HepG2 (cell line): ENCODE measurements at regions of chr3 and their contacts with region 1.

Region 1: GRCh38 chr3:37456270-37456708 is 281.9 kb upstream of the LRRFIP2 start:
- DNase-seq: no peak
- ATAC-seq: no peak
- H3K4me3 ChIP-seq: no peak overlapping the region
- H3K27ac ChIP-seq: no peak overlapping the region
- H3K4me1 ChIP-seq: peaks cover 4% of the 10 kb centered on the region
- H3K27me3 ChIP-seq: peaks cover 7 to 61% of the 10 kb centered on the region in 2 experiments; a peak in 3 of 5 replicates
- CTCF ChIP-seq: no peak
- EP300 ChIP-seq: no peak
- POLR2A ChIP-seq: no peak
- RAD21 ChIP-seq: no peak

Region 2: DNA sequence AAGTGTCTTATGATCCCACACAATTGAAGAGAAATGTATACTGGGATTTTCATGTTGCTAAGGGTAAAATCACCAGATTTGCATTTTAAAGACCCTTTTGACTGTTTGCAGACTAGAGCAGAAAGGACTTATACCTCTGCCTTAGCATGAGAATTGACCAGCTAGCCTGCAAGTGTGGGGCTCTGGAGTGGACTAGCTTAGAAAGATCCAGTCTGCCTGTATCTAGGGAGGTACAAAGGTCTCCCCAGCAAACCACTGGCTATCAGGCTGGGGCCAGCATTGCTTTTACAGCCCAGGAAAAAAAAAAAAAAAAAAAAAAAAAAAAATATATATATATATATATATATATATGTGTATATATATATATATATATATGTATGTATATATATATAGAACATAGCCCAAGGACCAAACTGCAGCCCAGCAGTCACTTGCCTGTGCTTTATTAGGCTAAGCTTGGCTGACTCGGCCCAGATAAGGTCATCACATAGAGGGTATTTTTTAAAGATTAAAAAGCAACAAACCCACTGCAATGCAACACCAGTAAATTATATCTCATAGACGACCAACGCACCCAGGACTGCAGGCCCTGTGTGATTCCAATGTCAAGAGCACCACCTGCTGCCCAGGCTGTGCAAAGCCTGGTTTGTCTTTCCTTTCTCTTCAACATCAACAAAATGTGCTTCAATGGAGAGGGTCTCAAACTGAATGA is 755.6 kb before region 1 on chr3:
- CTCF ChIA-PET with region 1: no interaction called
- POLR2A ChIA-PET with region 1: no interaction called
- in situ Hi-C with region 1: no loop called
- intact Hi-C with region 1: no loop called
- DNase-seq: peak; percentile 44
- ATAC-seq: peak; percentile 97
- H3K4me3 ChIP-seq: no peak overlapping the region
- H3K27ac ChIP-seq: no peak overlapping the region
- H3K4me1 ChIP-seq: no peaks in the 10 kb centered on the region
- H3K27me3 ChIP-seq: no peaks in the 10 kb centered on the region
- CTCF ChIP-seq: peak; percentile 84
- EP300 ChIP-seq: no peak
- POLR2A ChIP-seq: no peak
- RAD21 ChIP-seq: peak; percentile 72

Region 3: DNA sequence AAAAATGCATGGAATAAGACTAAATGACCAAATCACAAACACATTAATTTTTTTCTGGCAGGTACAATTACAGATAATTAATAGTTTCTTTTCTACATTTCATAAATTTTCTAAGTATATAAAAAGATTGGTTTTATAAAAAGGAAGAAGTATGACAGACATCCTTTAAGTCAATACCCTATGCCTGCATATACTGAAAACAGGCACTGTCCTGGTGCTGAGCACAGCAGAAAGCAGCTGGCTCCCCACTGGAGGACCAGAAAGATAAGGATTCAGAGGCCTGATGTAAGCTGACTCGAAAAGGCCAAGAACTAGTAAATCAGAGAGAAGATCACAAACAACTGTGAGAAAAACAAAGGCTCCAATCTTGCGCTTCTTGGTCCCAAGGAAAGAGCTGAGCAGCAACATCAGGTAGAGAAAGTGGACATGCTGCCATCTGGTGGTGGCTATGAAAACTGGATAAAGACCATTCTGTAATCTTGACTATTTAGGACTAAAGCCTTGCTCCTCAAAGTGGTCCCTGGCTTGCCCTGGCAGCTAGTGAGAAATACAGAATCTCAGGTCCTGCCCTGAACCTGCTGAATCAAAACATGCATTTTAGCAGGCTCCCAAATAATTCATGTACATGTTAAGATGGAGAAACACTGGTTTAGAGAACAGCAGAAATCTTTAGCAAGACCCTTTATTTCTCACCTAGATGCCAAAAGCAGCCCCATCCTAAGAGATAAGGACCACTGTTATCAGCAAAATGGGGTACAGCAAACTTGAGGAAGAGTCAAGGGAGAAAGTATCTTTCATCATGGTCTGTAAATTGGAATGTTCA is 587.5 kb before region 1 on chr3:
- CTCF ChIA-PET with region 1: no interaction called
- POLR2A ChIA-PET with region 1: no interaction called
- in situ Hi-C with region 1: no loop called
- intact Hi-C with region 1: no loop called
- DNase-seq: peak; percentile 17
- ATAC-seq: peak; percentile 90
- H3K4me3 ChIP-seq: no peak overlapping the region
- H3K27ac ChIP-seq: no peak overlapping the region
- H3K4me1 ChIP-seq: no peaks in the 10 kb centered on the region
- H3K27me3 ChIP-seq: no peaks in the 10 kb centered on the region; a peak in 1 of 5 replicates
- CTCF ChIP-seq: peak; percentile 82
- EP300 ChIP-seq: no peak
- POLR2A ChIP-seq: no peak
- RAD21 ChIP-seq: peak; percentile 43; the same call in 1 of the 2 replicates

Region 4: GRCh38 chr3:39101022-39101689 is 1644.9 kb after region 1 on chr3:
- CTCF ChIA-PET with region 1: no interaction called
- POLR2A ChIA-PET with region 1: no interaction called
- in situ Hi-C with region 1: no loop called
- intact Hi-C with region 1: loop called (anchors 5 kb)
- DNase-seq: peak; percentile 29
- ATAC-seq: peak; percentile 70
- H3K4me3 ChIP-seq: no peak overlapping the region
- H3K27ac ChIP-seq: no peak overlapping the region
- H3K4me1 ChIP-seq: peaks cover 33% of the 10 kb centered on the region
- H3K27me3 ChIP-seq: no peaks in the 10 kb centered on the region
- CTCF ChIP-seq: peak; percentile 71
- EP300 ChIP-seq: no peak
- POLR2A ChIP-seq: no peak
- RAD21 ChIP-seq: no peak